ENCODE measurements at regions of chr5 and their contacts with region 1.

Region 1: DNA sequence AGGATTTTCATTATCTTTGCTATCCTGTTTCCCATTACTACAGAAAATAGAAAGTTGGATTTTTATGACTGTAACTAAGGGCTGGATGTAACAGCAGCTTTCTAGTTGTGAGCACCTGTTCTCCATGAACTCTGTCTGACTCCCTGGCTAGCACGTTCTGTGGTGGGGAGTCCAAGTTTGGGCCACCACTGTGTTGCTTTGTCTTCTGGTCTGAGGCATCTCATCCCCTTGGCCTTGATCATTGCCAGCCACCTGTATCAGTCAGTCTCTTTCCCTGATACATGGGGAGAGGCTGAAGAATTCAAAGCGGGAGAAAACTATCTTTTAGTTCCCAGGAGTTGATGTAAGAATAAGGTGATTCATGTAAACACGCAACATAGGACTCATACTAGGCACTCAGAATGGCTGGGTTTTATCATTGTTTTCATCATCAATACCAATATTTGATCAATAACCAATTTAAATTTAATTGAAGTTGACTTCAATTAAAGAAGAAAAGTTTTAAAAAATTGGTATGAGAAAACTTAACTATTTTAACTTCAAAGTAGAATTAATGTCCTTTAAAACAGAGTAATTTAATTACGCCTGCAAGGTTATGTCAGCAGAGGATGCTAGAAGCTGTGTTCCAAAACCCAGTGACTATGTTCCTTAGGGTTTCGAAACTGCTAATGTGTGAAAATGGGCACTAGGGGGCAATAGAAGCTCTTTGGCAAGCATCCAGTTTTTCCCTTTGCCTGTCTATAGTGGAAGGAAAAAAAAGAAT is 33.6 kb downstream of the WDR70 start:
- DNase-seq: peak; percentile 73
- H3K4me3 ChIP-seq: no peak overlapping the region
- H3K27ac ChIP-seq: no peak overlapping the region
- H3K4me1 ChIP-seq: no peaks in the 10 kb centered on the region
- H3K27me3 ChIP-seq: no peaks in the 10 kb centered on the region
- CTCF ChIP-seq: peak; percentile 97 to 99

Region 2: DNA sequence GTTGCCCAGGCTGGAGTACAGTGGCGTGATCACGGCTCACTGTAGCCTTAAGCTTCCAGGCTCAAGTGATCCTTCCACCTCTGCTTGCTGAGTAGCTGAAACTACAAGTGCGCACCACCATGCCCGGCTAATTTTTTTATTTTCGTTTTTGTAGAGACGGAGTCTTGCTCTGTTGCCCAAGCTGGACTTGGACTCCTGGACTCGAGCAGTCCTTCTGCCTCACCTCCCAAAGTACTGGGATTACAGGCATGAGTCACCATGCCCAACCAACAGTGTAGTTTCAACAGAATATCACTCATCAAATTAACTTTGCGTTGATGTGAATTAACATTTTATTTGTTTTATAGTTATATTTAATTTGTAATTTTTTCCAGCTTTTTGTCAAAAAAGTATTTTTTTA is 11.7 kb after region 1 on chr5:
- CTCF ChIA-PET with region 1: interaction called, 26 read pairs
- dilution Hi-C with region 1: no loop called
- in situ Hi-C with region 1: no loop called
- intact Hi-C with region 1: no loop called
- DNase-seq: no peak
- H3K4me3 ChIP-seq: no peak overlapping the region
- H3K27ac ChIP-seq: no peak overlapping the region
- H3K4me1 ChIP-seq: no peaks in the 10 kb centered on the region
- H3K27me3 ChIP-seq: no peaks in the 10 kb centered on the region
- CTCF ChIP-seq: no peak

Region 3: GRCh38 chr5:37539461-37539860 is 126.8 kb after region 1 on chr5:
- CTCF ChIA-PET with region 1: no interaction called
- dilution Hi-C with region 1: no loop called
- in situ Hi-C with region 1: no loop called
- intact Hi-C with region 1: no loop called
- DNase-seq: no peak
- H3K4me3 ChIP-seq: no peak overlapping the region
- H3K27ac ChIP-seq: peak overlapping the region; percentile 11
- H3K4me1 ChIP-seq: peaks cover 9% of the 10 kb centered on the region
- H3K27me3 ChIP-seq: no peaks in the 10 kb centered on the region
- CTCF ChIP-seq: no peak

Region 4: DNA sequence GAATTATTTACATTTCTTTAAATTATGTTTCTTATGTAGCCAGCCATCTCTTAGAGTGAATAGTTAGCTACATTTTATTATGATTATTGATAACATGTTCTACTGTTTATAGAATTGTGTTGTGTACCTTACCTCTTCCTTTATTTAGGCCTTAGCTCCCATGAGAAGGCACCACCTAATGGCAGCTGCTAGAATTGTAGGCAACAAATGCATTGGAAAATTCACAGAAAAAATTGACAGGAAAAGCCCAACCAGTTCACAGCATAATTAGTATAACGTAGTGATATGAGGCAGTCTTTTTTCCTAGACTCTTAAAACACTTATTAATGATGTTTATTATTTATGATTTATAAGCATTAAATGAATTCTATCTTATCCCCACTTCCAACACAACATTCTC is 142.2 kb after region 1 on chr5:
- CTCF ChIA-PET with region 1: interaction called, 4 read pairs
- dilution Hi-C with region 1: no loop called
- in situ Hi-C with region 1: no loop called
- intact Hi-C with region 1: loop called (anchors 1 kb)
- DNase-seq: peak; percentile 34
- H3K4me3 ChIP-seq: no peak overlapping the region
- H3K27ac ChIP-seq: no peak overlapping the region
- H3K4me1 ChIP-seq: no peaks in the 10 kb centered on the region
- H3K27me3 ChIP-seq: no peaks in the 10 kb centered on the region
- CTCF ChIP-seq: peak; percentile 61 to 73

Region 5: DNA sequence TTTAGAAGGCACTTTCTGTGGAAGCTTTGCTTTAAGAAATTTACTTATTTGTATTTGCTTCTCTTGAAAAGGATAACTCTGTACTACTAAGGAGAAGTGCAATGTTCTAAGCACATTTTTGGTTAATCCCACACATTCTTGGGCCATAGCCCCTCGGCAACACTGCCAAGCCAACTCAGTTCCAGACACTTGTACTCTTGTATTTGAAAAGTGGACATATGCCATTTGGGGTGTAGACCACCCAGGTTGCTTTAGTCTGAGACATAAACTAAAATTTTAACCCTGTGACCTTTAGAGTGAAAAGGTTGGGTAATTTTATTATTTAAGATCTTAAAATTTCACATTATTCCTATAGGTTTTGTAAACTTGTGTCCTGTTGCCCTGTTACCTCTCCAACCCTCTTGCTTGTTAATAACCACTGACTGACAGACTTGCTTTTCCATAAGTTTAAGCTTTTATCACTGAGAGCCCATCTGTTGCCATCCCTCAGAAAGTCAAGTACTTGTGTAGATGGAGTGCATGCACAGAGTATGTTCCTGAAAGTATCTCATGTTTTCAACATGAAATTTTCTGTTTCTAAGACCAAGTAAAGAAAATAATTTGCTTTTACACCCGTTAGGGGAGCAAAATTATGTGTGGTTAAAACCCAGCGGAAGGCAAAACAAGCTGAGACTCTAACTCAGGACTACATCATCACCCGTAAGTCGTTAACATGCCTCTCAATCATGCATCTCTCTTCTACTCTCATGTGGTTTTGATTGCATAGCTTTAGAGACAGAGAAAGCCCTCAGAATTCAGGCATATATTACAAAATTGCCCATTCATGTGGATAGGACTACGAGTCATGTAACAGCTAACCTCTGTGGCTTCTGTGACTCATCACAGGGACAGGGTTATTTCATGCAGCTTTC is 309.8 kb after region 1 on chr5:
- CTCF ChIA-PET with region 1: interaction called, 17 read pairs
- dilution Hi-C with region 1: no loop called
- in situ Hi-C with region 1: no loop called
- intact Hi-C with region 1: no loop called
- DNase-seq: peak; percentile 96
- H3K4me3 ChIP-seq: no peak overlapping the region
- H3K27ac ChIP-seq: peak overlapping the region; percentile 53
- H3K4me1 ChIP-seq: peaks cover 21% of the 10 kb centered on the region
- H3K27me3 ChIP-seq: no peaks in the 10 kb centered on the region
- CTCF ChIP-seq: no peak

Region 6: DNA sequence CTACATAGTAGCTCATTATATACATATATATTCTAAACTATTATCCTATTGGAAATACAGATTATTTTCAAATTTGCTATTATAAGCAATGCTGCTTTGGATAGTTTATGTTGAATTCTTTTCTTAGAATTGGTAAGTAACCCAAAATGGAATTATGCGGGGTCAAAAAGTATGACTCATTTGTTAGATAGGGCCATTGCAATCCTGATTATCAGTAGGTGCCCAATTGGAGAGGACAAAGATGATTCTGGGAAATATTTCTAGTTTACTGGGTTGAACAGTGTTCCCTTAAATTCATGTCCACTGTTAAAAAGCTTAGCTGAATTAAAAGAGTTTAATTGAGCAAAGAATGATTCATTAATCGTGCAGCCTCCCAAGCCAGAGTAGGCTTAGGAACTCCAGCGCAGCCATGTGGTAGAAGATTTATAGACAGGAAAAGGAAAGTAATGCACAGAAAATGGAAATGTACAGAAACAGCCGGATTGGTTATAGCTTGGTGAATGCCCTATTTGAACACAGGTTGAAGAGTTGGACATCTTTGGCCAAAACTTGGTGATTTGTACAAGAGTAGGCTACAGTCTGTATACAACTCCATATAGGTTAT is 345.4 kb after region 1 on chr5:
- CTCF ChIA-PET with region 1: interaction called, 15 read pairs
- dilution Hi-C with region 1: no loop called
- in situ Hi-C with region 1: loop called in 1 of 2 experiments (anchors 25 kb)
- intact Hi-C with region 1: loop called (anchors 1 kb)
- DNase-seq: no peak
- H3K4me3 ChIP-seq: no peak overlapping the region
- H3K27ac ChIP-seq: no peak overlapping the region
- H3K4me1 ChIP-seq: no peaks in the 10 kb centered on the region
- H3K27me3 ChIP-seq: no peaks in the 10 kb centered on the region
- CTCF ChIP-seq: peak; percentile 8 to 37

Region 7: DNA sequence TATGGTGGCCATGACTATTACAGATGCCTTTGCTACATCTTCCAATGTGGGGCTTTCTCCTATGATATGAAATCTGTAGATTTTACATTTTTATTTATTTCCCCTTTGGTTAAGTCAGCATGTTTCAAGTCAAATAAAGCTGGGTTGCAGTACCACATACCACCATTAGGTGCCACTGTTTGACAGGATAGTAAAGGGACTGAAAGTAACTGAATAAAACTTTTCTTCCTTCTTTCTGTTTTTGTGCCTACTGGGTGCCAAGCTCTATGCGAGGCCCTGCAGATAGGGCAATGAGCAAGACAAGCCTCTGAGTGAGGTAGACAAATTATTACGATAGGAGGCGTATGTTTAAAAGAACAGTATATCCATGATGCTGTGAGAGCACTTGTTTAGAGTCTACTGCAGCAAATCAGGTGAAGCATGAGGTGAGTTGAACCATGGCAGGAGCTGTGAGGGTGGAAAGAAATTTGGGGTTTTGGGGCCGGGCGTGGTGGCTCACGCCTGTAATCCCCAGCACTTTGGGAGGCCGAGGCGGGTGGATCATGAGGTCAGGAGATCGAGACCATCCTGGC is 362.3 kb after region 1 on chr5:
- CTCF ChIA-PET with region 1: no interaction called
- dilution Hi-C with region 1: no loop called
- in situ Hi-C with region 1: loop called in 1 of 2 experiments (anchors 25 kb)
- intact Hi-C with region 1: loop called (anchors 5 kb)
- DNase-seq: peak; percentile 32
- H3K4me3 ChIP-seq: no peak overlapping the region
- H3K27ac ChIP-seq: no peak overlapping the region
- H3K4me1 ChIP-seq: peaks cover 27% of the 10 kb centered on the region
- H3K27me3 ChIP-seq: no peaks in the 10 kb centered on the region
- CTCF ChIP-seq: peak; percentile 61 to 87

Region 8: GRCh38 chr5:37926732-37927131 is 514.0 kb after region 1 on chr5:
- CTCF ChIA-PET with region 1: no interaction called
- dilution Hi-C with region 1: no loop called
- in situ Hi-C with region 1: no loop called
- intact Hi-C with region 1: loop called (anchors 1 kb)
- DNase-seq: peak; percentile 74
- H3K4me3 ChIP-seq: no peak overlapping the region
- H3K27ac ChIP-seq: no peak overlapping the region
- H3K4me1 ChIP-seq: peaks cover 10% of the 10 kb centered on the region
- H3K27me3 ChIP-seq: no peaks in the 10 kb centered on the region
- CTCF ChIP-seq: peak in 1 of 2 donors; percentile 47